H1 (cell line): ENCODE measurements at regions of chr7 and their contacts with region 1.

Region 1: DNA sequence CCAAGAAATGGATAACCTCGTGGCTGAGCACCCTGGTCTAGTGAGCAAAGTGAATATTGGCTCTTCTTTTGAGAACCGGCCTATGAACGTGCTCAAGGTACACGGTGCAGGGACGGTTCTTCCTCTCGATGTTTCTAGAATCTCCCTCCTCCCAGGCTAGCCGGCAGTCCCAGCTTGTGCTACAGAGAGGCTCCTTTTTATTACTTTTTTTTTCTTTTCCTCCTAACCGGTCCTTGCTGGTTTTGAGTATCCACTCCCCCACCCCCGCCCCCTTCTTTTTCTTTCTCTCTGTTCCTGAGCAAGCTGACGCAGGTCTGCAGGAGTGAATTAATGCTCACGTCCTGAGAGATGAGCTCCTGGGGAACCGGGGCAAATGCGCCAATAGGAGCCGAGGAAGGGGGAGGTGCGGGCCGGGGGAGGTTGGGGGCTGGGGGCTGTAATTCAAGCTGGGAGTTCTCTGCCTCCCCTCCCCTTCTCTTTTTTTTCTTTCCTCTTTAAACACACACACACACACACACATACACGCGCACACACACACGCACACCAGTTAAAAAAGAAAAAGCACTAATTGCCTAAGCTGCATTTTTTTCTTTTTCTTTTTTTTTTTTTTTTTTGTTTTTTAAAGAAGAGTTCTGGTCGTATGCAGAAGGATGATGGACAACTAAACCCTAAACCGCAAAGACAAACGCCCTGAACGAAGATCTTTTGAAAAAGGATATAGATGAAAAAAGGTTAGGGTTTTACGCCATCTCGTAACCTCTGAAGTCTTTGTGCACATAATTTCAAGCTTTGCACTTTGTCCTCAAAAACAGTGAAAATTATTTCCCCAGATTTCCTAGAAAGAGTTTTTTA is 6.6 kb downstream of the CPA2 start:
- DNase-seq: peak; percentile 67 to 84
- H3K4me3 ChIP-seq: peak overlapping the region; percentile 1 to 54 (median 21); a peak in 6 of 8 replicates
- H3K27ac ChIP-seq: peak overlapping the region; percentile 96
- H3K4me1 ChIP-seq: peaks cover 6 to 27% (median 17%) of the 10 kb centered on the region in 4 experiments
- H3K27me3 ChIP-seq: no peaks in the 10 kb centered on the region
- CTCF ChIP-seq: no peak
- EP300 ChIP-seq: peak in 1 of 2 experiments; percentile 84; a peak in 1 of 3 replicates
- POLR2A ChIP-seq: peak; percentile 75 to 89
- RAD21 ChIP-seq: 0 out of 4 replicates have a peak, but pooled peaks of 1 of the 2 experiments have one; percentile 6

Region 2: GRCh38 chr7:130124711-130125110 is 148.6 kb before region 1 on chr7:
- CTCF ChIA-PET with region 1: no interaction called
- POLR2A ChIA-PET with region 1: no interaction called
- DNase-seq: no peak
- H3K4me3 ChIP-seq: no peak overlapping the region
- H3K27ac ChIP-seq: no peak overlapping the region
- H3K4me1 ChIP-seq: no peaks in the 10 kb centered on the region
- H3K27me3 ChIP-seq: no peaks in the 10 kb centered on the region
- CTCF ChIP-seq: no peak
- EP300 ChIP-seq: no peak
- POLR2A ChIP-seq: no peak
- RAD21 ChIP-seq: no peak

Region 3: DNA sequence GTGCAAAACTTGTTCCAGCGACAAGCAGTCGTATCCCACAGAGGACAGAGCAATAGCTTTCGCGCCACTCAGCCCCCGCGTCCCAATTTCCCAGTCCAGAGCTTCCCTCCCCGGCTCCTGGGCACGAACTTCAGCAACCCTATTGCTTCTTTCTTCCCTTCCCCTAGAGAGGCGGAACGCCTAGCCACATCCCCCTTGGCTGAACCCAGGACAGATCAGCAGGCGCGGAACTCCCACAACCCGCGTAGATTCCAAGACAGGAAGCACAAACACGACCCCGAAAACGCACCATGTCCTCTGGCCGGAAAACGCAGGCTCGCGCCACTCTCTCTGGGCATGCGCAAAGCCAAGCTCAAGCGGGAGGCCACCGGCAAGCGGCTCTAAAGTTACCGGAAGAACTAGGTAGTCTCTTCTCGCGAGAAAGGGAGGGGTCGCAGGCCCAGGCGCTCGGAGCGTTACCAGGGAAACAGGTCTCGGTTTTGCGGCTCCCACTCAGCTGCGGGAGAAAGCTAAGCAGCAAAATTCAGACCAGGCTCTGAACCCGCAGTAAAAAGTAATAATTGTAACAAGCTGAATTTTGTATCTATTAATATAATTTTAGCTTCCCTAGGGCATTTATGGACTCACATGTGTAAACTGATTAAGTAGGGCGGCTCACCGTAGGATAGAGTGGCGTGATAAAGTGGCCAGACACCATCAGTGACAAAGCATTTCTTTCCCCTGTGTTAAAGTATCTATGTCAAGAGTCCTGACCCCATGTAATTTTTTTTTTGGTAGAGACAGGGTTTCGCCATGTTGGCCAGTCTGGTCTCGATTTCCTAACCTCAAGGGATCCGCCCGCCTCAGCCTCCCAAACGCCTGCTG is 68.0 kb before region 1 on chr7 and contains the start of gene TMEM209:
- CTCF ChIA-PET with region 1: interaction called, 7 read pairs
- POLR2A ChIA-PET with region 1: interaction called, 14 read pairs
- DNase-seq: peak; percentile 93 to 96
- H3K4me3 ChIP-seq: peak within 1 kb of the TSS; percentile 88 to 98 (median 92)
- H3K27ac ChIP-seq: peak within 1 kb of the TSS; percentile 97
- H3K4me1 ChIP-seq: no peaks in the 10 kb centered on the region
- H3K27me3 ChIP-seq: no peaks in the 10 kb centered on the region
- CTCF ChIP-seq: no peak
- EP300 ChIP-seq: no peak
- POLR2A ChIP-seq: peak; percentile 91 to 98
- RAD21 ChIP-seq: no peak; a peak in 1 of 4 replicates
- total RNA-seq, gene TMEM209: 25.6 and 28.5 TPM in 2 replicates

Region 4: GRCh38 chr7:130216750-130217149 is 56.6 kb before region 1 on chr7:
- CTCF ChIA-PET with region 1: no interaction called
- POLR2A ChIA-PET with region 1: no interaction called
- DNase-seq: no peak
- H3K4me3 ChIP-seq: no peak overlapping the region
- H3K27ac ChIP-seq: no peak overlapping the region
- H3K4me1 ChIP-seq: no peaks in the 10 kb centered on the region
- H3K27me3 ChIP-seq: no peaks in the 10 kb centered on the region
- CTCF ChIP-seq: peak in 2 of 3 experiments; percentile 15 to 40; a peak in 2 of 4 replicates
- EP300 ChIP-seq: no peak
- POLR2A ChIP-seq: no peak
- RAD21 ChIP-seq: peak; percentile 21 to 38; a peak in 3 of 4 replicates

Region 5: DNA sequence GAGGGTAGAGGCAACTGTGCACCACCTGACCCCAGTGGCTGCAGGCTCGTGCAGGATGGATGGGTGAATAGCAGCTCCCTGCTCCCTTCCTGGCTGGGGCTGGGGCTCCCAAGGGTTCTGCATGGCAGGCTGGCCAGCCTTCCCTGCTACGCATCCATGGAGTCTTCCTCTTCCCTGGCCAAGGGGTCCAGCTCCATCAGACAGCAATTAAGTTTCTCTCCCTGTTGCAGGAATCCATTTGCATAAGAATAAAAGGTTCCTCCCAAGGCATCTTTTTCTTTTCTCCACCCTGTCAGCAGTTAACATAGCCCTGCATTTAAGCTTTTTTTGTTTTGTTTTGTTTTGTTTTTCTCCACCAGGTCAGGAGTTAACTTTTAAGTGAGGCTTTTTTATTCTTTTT is 16.6 kb before region 1 on chr7:
- CTCF ChIA-PET with region 1: interaction called, 7 read pairs
- POLR2A ChIA-PET with region 1: interaction called, 23 read pairs
- DNase-seq: no peak
- H3K4me3 ChIP-seq: no peak overlapping the region
- H3K27ac ChIP-seq: no peak overlapping the region
- H3K4me1 ChIP-seq: peaks cover 0 to 6% (median 2%) of the 10 kb centered on the region in 4 experiments; a peak in 3 of 7 replicates
- H3K27me3 ChIP-seq: no peaks in the 10 kb centered on the region
- CTCF ChIP-seq: no peak
- EP300 ChIP-seq: no peak
- POLR2A ChIP-seq: no peak
- RAD21 ChIP-seq: no peak

Region 6: DNA sequence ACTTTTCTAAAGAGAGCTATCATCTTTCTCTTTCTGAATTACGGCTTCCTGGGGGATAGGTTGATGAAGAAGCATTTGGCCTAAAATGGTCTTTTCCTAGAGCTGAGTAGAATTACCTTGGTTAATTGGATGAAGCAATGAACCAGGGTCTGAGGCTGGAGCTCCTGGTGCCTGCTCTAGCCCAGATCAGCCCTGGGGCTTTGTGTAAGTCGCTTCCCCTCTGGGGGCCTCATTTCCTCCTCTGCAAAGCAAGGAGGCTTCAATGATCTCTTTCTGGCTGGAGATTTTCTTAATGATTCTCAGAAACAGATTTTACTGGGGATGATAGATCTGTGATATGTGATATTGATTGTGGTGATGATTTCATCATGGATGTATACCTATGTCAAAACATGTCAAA is 10.2 kb before region 1 on chr7:
- CTCF ChIA-PET with region 1: interaction called, 10 read pairs
- POLR2A ChIA-PET with region 1: interaction called, 23 read pairs
- DNase-seq: no peak
- H3K4me3 ChIP-seq: no peak overlapping the region
- H3K27ac ChIP-seq: no peak overlapping the region
- H3K4me1 ChIP-seq: peaks cover 0 to 10% (median 2%) of the 10 kb centered on the region in 4 experiments; a peak in 2 of 7 replicates
- H3K27me3 ChIP-seq: no peaks in the 10 kb centered on the region
- CTCF ChIP-seq: no peak
- EP300 ChIP-seq: no peak
- POLR2A ChIP-seq: no peak
- RAD21 ChIP-seq: no peak

Region 7: DNA sequence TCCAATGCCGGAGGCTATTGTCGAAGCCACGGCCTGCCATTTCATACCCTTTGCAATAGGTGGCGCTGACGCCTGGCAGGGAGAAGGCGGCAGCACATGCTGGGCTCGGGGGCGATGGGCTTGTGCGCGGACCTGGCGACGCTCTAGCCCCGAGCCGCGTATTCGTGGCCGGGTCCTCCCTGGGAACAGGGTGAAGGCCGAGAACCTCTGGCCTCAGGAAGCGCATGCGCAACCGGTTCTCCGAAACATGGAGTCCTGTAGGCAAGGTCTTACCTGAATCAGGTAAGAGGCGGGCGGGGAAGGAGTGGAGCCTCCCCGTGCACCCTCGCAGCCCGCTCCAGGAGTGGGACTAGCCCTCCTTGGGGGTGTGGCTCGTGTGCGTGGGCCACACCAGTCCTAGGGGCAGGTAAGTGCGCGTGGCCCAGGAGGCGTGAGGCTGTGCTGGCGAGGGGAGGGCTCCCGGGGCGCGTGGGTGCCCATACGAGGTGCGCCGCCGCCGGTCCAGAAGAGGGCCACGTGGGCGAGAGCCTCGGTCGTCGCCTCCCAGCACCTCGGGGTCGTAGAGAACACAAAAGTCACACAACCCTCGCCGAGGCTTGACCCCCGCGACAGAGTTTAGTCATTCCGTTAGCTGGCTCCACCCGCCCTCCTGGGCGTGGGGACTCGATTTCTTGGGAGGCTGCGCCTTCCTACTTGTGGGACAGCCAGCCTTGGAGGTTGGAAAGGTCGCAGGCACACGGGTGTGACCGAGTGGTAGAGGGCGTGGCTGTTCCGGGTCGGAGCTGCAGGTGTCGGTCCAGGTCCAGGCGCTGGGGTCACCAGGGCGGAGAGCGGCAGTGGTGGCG is 213.0 kb after region 1 on chr7:
- CTCF ChIA-PET with region 1: interaction called, 5 read pairs
- POLR2A ChIA-PET with region 1: interaction called, 11 read pairs
- DNase-seq: peak; percentile 87 to 94
- H3K4me3 ChIP-seq: peak overlapping the region; percentile 58 to 85 (median 74)
- H3K27ac ChIP-seq: no peak overlapping the region; the same call in 1 of the 2 replicates
- H3K4me1 ChIP-seq: peaks cover 0 to 10% (median 5%) of the 10 kb centered on the region in 4 experiments; a peak in 6 of 7 replicates
- H3K27me3 ChIP-seq: peaks cover 0 to 4% (median 0%) of the 10 kb centered on the region in 4 experiments; a peak in 2 of 7 replicates
- CTCF ChIP-seq: peak; percentile 78 to 89 (median 82)
- EP300 ChIP-seq: peak in 1 of 2 experiments; percentile 38; a peak in 1 of 3 replicates
- POLR2A ChIP-seq: peak in 1 of 2 experiments; percentile 78; a peak in 2 of 3 replicates
- RAD21 ChIP-seq: peak; percentile 68 to 73